ENCODE measurements at regions of chr7 and their contacts with region 1.

Region 1: GRCh38 chr7:6637544-6638229 is 569 bp downstream of the ZNF316 start:
- DNase-seq: peak; percentile 77
- ATAC-seq: peak; percentile 80
- H3K4me3 Mint-ChIP-seq: peak overlapping the region; percentile 93
- H3K27ac Mint-ChIP-seq: peak overlapping the region; percentile 94
- H3K4me1 Mint-ChIP-seq: peaks cover 23% of the 10 kb centered on the region
- H3K27me3 Mint-ChIP-seq: no peaks in the 10 kb centered on the region

Region 2: DNA sequence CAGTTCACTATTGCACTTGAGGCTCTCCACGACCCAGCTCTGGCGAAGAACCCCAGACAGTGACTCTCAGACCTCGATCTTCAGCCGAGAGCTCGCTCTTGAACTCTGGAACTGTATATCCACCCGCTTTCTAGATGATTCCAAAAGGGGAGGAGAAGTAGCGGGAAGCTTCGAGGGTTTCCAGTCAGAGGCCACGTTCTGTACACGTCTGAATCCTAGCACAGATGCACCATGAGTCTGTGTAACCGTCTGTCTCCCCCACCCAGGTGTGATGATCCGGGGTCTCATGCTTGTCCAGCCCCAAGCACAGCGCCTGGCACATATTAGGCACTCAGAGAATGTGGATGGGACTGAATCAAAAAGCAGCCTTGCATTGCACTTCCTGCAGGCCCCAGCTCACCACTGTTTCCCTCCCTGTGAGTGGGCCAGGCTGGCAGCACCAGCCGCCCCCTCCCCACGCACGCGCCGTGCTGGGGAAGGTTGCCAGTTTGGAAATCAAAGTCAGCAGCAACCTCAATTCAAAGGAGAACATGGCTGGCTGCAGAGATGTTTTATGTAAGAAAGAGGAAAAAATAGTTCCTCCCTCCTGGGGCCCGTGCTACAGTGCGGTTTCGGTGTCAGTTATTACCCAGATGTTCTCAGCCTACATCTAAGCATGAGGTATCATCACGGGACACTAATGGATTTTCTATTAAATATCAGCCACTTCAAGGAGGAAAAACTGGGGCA is 92.1 kb before region 1 on chr7:
- POLR2A ChIA-PET with region 1: no interaction called
- DNase-seq: no peak
- ATAC-seq: no peak
- H3K4me3 Mint-ChIP-seq: no peak overlapping the region
- H3K27ac Mint-ChIP-seq: no peak overlapping the region
- H3K4me1 Mint-ChIP-seq: peaks cover 3% of the 10 kb centered on the region
- H3K27me3 Mint-ChIP-seq: peaks cover 2% of the 10 kb centered on the region

Region 3: DNA sequence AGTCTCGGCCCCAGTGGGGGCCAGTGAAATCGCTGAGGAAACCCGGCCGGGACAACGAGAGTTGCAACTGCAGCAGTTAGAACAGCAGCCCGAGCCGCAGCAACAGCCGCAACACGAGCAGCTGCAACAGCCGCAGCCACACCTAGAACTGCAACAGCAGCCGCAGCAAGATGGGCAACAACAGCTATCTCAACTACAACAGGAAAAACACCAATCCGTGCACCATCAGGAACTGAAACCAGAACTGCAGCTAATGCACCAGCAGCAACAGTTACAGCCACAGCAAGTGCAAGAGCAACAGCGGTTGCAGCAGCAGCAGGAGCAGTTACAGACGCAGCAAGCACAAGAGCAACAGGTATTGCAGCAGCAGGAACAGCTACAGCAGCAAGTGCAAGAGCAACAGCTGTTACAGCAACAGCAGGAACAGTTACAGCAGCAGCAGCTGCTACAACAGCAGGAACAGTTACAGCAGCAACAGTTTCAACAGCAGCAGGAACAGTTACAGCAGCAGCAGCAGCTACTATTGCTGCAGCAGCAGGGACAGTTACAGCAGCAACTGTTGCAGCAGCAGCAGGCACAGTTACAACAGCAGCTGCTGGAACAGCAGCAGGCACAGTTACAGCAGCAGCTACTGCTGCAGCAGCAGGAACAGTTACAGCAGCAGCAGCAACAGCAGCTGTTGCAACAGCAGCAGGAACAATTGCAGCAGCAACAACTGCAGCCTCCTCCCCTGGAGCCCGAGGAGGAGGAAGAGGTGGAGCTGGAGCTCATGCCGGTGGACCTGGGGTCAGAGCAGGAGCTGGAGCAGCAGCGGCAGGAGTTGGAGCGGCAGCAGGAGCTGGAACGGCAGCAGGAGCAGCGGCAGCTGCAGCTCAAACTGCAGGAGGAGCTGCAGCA is 16.2 kb before region 1 on chr7:
- POLR2A ChIA-PET with region 1: interaction called, 13 read pairs
- DNase-seq: no peak
- ATAC-seq: no peak
- H3K4me3 Mint-ChIP-seq: peak overlapping the region; percentile 43
- H3K27ac Mint-ChIP-seq: peak overlapping the region; percentile 49
- H3K4me1 Mint-ChIP-seq: peaks cover 45% of the 10 kb centered on the region
- H3K27me3 Mint-ChIP-seq: peaks cover 11% of the 10 kb centered on the region

Region 4: GRCh38 chr7:6706677-6707544 is 69.2 kb after region 1 on chr7 and contains the start of gene ZNF12:
- POLR2A ChIA-PET with region 1: no interaction called
- DNase-seq: peak; percentile 96
- ATAC-seq: peak; percentile 95
- H3K4me3 Mint-ChIP-seq: peak within 1 kb of the TSS; percentile 90
- H3K27ac Mint-ChIP-seq: peak within 1 kb of the TSS; percentile 87
- H3K4me1 Mint-ChIP-seq: peaks cover 27% of the 10 kb centered on the region
- H3K27me3 Mint-ChIP-seq: no peaks in the 10 kb centered on the region
- total RNA-seq, gene ZNF12: 32.4 to 34.6 TPM

Measured in activated naive CD8-positive, alpha-beta T cell treated with anti-CD3 and anti-CD28 coated beads, Interleukin-2, amount 10 ng/mL, durations not matched to agents 7 days and 5 days (primary cell).